CD8-positive, alpha-beta T cell (primary cell): ENCODE measurements at regions of chr13 and their contacts with region 1.

Region 1: GRCh38 chr13:32427852-32428580 is at the start of gene N4BP2L1:
- DNase-seq: peak; percentile 64 to 94 (median 80)
- ATAC-seq: peak; percentile 72
- H3K4me3 ChIP-seq: peak within 1 kb of the TSS; percentile 60 to 72
- H3K4me3 Mint-ChIP-seq: peak within 1 kb of the TSS; percentile 87
- H3K27ac ChIP-seq: peak within 1 kb of the TSS; percentile 85 to 98
- H3K27ac Mint-ChIP-seq: peak within 1 kb of the TSS; percentile 94
- H3K4me1 ChIP-seq: peaks cover 29% of the 10 kb centered on the region
- H3K4me1 Mint-ChIP-seq: peaks cover 39% of the 10 kb centered on the region
- H3K27me3 ChIP-seq: no peaks in the 10 kb centered on the region
- H3K27me3 Mint-ChIP-seq: no peaks in the 10 kb centered on the region
- CTCF ChIP-seq: no peak
- total RNA-seq, gene N4BP2L1: 53.2 to 54.1 TPM

Region 2: DNA sequence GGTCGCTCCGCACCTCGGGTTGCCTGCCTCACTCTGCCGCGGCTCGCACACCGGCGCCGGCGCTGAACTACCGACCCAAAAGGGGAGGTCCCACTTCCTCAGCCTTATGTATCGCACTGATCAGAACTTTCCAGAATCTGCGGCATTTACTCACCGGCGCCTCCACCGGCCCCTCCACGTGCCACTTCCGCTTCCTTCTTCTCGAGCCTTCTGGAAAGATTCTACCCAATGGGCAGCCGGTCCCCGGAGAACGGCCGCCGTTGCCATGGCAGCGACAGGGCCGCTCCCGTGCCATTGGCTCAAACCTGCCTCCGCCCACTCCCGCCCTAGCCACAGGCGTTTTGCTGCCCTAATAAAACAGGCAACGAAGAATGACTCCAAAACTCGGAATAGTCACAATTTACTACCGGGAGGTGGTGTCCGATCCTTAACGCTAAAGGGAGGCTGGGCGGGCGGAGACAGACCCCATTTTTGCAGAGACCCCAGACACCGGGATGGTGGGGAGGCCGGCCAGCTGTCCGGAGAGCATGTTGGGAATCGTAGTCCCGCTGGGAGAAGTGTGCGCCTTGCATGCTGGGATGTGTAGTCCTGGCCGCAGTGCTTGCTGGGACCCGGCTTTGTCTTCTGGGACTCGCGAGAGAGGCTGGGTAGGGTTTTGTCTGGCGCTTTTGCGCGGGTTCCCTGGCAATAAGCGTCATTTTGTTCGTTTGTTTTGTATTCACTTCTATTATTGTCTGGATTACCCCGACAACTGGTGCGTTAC is 1266.0 kb before region 1 on chr13 and contains the start of gene HSPH1:
- CTCF ChIA-PET with region 1: no interaction called
- POLR2A ChIA-PET with region 1: interaction called, 3 read pairs
- intact Hi-C with region 1: loop called in 1 of 2 experiments (anchors 5 kb)
- DNase-seq: peak; percentile 96 to 99 (median 98)
- ATAC-seq: peak; percentile 83
- H3K4me3 ChIP-seq: peak within 1 kb of the TSS; percentile 76 to 95
- H3K4me3 Mint-ChIP-seq: peak within 1 kb of the TSS; percentile 95
- H3K27ac ChIP-seq: peak within 1 kb of the TSS; percentile 98
- H3K27ac Mint-ChIP-seq: peak within 1 kb of the TSS; percentile 98
- H3K4me1 ChIP-seq: peaks cover 25% of the 10 kb centered on the region
- H3K4me1 Mint-ChIP-seq: peaks cover 43% of the 10 kb centered on the region
- H3K27me3 ChIP-seq: no peaks in the 10 kb centered on the region
- H3K27me3 Mint-ChIP-seq: no peaks in the 10 kb centered on the region
- CTCF ChIP-seq: no peak
- total RNA-seq, gene HSPH1: 189 to 199 TPM

Region 3: GRCh38 chr13:32315238-32316027 is 112.6 kb before region 1 on chr13 and contains the starts of genes BRCA2 and ZAR1L:
- CTCF ChIA-PET with region 1: no interaction called
- POLR2A ChIA-PET with region 1: interaction called, 28 read pairs
- intact Hi-C with region 1: loop called (anchors 1 kb)
- DNase-seq: peak; percentile 73 to 95 (median 88)
- ATAC-seq: peak; percentile 90
- H3K4me3 ChIP-seq: peak within 1 kb of the TSS; percentile 80 to 81
- H3K4me3 Mint-ChIP-seq: peak within 1 kb of the TSS; percentile 93
- H3K27ac ChIP-seq: peak within 1 kb of the TSS; percentile 99
- H3K27ac Mint-ChIP-seq: peak within 1 kb of the TSS; percentile 100
- H3K4me1 ChIP-seq: peaks cover 4% of the 10 kb centered on the region
- H3K4me1 Mint-ChIP-seq: peaks cover 14% of the 10 kb centered on the region
- H3K27me3 ChIP-seq: no peaks in the 10 kb centered on the region
- H3K27me3 Mint-ChIP-seq: no peaks in the 10 kb centered on the region
- CTCF ChIP-seq: no peak
- total RNA-seq, gene BRCA2: 2.6 to 3.6 TPM
- total RNA-seq, gene ZAR1L: not detected

Region 4: DNA sequence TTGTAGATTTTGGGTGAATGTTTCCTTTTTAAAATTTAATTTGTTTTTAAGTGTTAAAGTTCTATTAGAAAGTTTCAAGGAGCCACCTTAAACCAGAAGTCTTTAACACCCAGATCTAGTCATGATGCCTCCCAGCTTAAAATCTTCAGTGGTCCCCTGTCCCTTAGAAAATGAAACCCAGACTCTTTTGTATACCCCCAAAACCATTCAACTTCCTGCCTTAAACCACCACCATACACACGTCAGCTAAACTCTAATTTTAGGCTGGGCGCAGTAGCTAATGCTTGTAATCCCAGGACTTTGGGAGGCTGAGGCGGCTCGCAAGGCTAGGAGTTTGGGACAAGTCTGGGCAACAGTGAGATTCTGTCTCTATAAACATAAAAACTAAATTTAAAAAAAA is 38.0 kb before region 1 on chr13:
- CTCF ChIA-PET with region 1: no interaction called
- POLR2A ChIA-PET with region 1: interaction called, 5 read pairs
- intact Hi-C with region 1: loop called (anchors 5 kb)
- DNase-seq: peak in 3 of 9 experiments; percentile 23 to 71 (median 47)
- ATAC-seq: peak; percentile 91
- H3K4me3 ChIP-seq: no peak overlapping the region
- H3K4me3 Mint-ChIP-seq: peak overlapping the region; percentile 27
- H3K27ac ChIP-seq: peak overlapping the region in 1 of 2 experiments; percentile 42
- H3K27ac Mint-ChIP-seq: peak overlapping the region; percentile 10
- H3K4me1 ChIP-seq: peaks cover 23% of the 10 kb centered on the region
- H3K4me1 Mint-ChIP-seq: peaks cover 23% of the 10 kb centered on the region
- H3K27me3 ChIP-seq: no peaks in the 10 kb centered on the region
- H3K27me3 Mint-ChIP-seq: no peaks in the 10 kb centered on the region
- CTCF ChIP-seq: no peak

Region 5: DNA sequence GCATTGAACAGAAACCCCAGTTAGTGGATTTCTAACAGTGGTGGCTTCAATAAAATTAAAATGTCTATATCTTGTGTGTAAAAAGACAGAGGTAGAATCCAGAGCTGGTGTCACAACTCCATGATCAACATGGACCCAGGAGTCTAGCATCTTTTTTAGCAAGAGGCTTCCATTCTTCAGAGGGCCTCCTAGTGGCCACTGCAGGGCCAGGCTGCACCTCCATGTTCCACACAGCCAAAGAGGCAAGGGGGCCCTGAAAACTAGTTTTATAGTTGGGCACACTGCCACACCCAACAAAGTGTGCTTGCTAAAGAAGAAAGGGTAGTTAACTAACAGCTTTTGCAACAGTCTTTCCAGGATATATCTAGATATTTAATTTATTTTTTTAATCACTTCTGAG is 13.0 kb before region 1 on chr13:
- CTCF ChIA-PET with region 1: interaction called, 11 read pairs
- POLR2A ChIA-PET with region 1: interaction called, 4 read pairs
- intact Hi-C with region 1: no loop called
- DNase-seq: peak in 4 of 9 experiments; percentile 21 to 53 (median 42)
- ATAC-seq: peak; percentile 73
- H3K4me3 ChIP-seq: no peak overlapping the region
- H3K4me3 Mint-ChIP-seq: no peak overlapping the region
- H3K27ac ChIP-seq: no peak overlapping the region
- H3K27ac Mint-ChIP-seq: no peak overlapping the region
- H3K4me1 ChIP-seq: no peaks in the 10 kb centered on the region
- H3K4me1 Mint-ChIP-seq: peaks cover 16% of the 10 kb centered on the region
- H3K27me3 ChIP-seq: no peaks in the 10 kb centered on the region
- H3K27me3 Mint-ChIP-seq: no peaks in the 10 kb centered on the region
- CTCF ChIP-seq: no peak

Region 6: GRCh38 chr13:32453981-32454380 is 26.0 kb after region 1 on chr13:
- CTCF ChIA-PET with region 1: no interaction called
- POLR2A ChIA-PET with region 1: no interaction called
- intact Hi-C with region 1: no loop called
- DNase-seq: no peak
- ATAC-seq: no peak
- H3K4me3 ChIP-seq: no peak overlapping the region
- H3K4me3 Mint-ChIP-seq: no peak overlapping the region
- H3K27ac ChIP-seq: no peak overlapping the region
- H3K27ac Mint-ChIP-seq: no peak overlapping the region
- H3K4me1 ChIP-seq: no peaks in the 10 kb centered on the region
- H3K4me1 Mint-ChIP-seq: no peaks in the 10 kb centered on the region
- H3K27me3 ChIP-seq: no peaks in the 10 kb centered on the region
- H3K27me3 Mint-ChIP-seq: no peaks in the 10 kb centered on the region
- CTCF ChIP-seq: no peak

Region 7: DNA sequence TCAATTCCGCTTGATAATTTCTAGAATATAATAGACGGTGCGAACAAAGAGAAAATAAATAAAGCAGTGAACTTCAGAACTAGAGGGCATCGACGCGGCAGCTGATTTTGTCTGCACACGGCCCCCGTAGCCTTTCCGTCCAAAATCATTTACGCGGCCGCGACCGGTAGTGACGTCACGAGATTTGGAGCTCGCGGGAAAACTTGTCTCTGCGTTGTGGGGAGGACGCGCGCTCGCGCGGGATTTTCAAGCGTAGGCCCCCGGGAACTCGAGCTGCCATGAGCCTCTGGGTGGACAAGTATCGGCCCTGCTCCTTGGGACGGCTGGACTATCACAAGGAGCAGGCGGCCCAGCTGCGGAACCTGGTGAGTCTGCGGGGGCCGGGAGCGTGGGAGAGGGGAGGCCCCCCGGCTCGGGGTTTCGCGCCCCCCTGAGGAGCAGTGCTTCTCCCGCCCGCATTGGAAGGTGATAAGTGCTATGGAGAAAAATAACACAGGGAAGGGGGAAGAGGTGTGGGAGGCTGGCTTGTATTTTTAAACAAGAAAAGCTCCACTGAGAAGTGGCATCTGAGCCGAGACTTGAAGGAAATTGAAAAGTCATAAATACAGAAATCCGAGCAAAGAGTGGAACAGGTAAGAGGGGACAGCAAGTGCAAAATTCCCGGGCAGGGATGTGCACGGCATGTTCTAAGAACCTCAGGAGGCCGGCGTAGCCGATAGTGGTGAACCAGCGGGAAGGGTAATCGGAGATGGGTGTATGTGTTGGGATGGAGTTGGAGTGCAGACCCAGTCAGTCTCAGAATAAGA is 1390.1 kb after region 1 on chr13 and contains the start of gene RFC3:
- CTCF ChIA-PET with region 1: no interaction called
- POLR2A ChIA-PET with region 1: no interaction called
- intact Hi-C with region 1: loop called in 1 of 2 experiments (anchors 5 kb)
- DNase-seq: peak; percentile 81 to 95 (median 90)
- ATAC-seq: peak; percentile 86
- H3K4me3 ChIP-seq: peak within 1 kb of the TSS; percentile 72 to 74
- H3K4me3 Mint-ChIP-seq: peak within 1 kb of the TSS; percentile 93
- H3K27ac ChIP-seq: peak within 1 kb of the TSS; percentile 63 to 64
- H3K27ac Mint-ChIP-seq: peak within 1 kb of the TSS; percentile 88
- H3K4me1 ChIP-seq: peaks cover 8% of the 10 kb centered on the region
- H3K4me1 Mint-ChIP-seq: peaks cover 16% of the 10 kb centered on the region
- H3K27me3 ChIP-seq: no peaks in the 10 kb centered on the region
- H3K27me3 Mint-ChIP-seq: peaks cover 4% of the 10 kb centered on the region
- CTCF ChIP-seq: no peak
- total RNA-seq, gene RFC3: 5.8 to 6.2 TPM